ENCODE measurements at regions of chr3 and their contacts with region 1.

Region 1: DNA sequence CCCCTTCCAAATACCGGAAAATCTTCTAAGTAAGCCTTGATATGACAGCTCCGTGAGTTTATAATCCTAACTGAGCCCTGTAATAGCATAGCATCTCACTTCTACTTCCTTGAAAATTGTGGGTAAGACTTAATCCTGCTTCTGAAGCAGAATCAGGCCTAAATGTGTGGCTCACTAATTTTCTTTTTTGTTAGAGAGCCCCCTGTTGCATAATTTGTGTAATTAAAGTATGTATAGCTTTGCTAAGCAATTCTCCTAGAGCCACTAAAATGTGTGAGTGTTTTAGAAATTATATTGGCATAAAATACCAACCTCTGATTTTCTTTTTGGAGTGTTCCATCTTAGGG is 304.4 kb downstream of the FGF12 start:
- DNase-seq: no peak
- ATAC-seq: peak; percentile 46; the same call in 1 of the 2 replicates
- H3K4me3 ChIP-seq: no peak overlapping the region
- H3K27ac ChIP-seq: no peak overlapping the region
- H3K4me1 ChIP-seq: no peaks in the 10 kb centered on the region
- H3K27me3 ChIP-seq: peaks cover 15% of the 10 kb centered on the region; the same call in 1 of the 2 replicates
- CTCF ChIP-seq: peak; percentile 23 to 57 (median 25); a peak in 4 of 6 replicates
- POLR2A ChIP-seq: no peak
- RAD21 ChIP-seq: peak; percentile 54

Region 2: DNA sequence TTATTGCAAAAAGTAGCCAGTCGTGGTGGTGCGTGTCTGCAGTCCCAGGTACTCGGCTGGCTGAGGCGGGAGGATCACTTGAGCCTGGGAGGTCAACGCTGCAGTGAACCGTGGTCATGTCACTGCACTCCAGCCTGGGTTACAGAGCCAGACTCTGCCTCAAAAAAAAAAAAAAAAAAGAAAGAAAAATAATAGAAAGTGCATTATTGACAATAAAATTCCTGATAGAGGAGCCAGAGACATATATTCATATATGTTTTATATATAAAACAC is 1005.6 kb before region 1 on chr3:
- CTCF ChIA-PET with region 1: no interaction called
- POLR2A ChIA-PET with region 1: no interaction called
- RAD21 ChIA-PET with region 1: no interaction called
- intact Hi-C with region 1: loop called (anchors 2 kb)
- DNase-seq: no peak
- ATAC-seq: no peak
- H3K4me3 ChIP-seq: no peak overlapping the region
- H3K27ac ChIP-seq: no peak overlapping the region
- H3K4me1 ChIP-seq: no peaks in the 10 kb centered on the region; a peak in 1 of 4 replicates
- H3K27me3 ChIP-seq: no peaks in the 10 kb centered on the region
- CTCF ChIP-seq: no peak
- POLR2A ChIP-seq: no peak
- RAD21 ChIP-seq: no peak

Region 3: GRCh38 chr3:192130534-192131132 is 292.3 kb before region 1 on chr3:
- CTCF ChIA-PET with region 1: no interaction called
- POLR2A ChIA-PET with region 1: no interaction called
- RAD21 ChIA-PET with region 1: no interaction called
- intact Hi-C with region 1: loop called (anchors 2 kb)
- DNase-seq: peak; percentile 60
- ATAC-seq: peak; percentile 100
- H3K4me3 ChIP-seq: no peak overlapping the region
- H3K27ac ChIP-seq: no peak overlapping the region
- H3K4me1 ChIP-seq: no peaks in the 10 kb centered on the region
- H3K27me3 ChIP-seq: no peaks in the 10 kb centered on the region
- CTCF ChIP-seq: peak; percentile 42 to 85 (median 82); a peak in 5 of 6 replicates
- POLR2A ChIP-seq: no peak
- RAD21 ChIP-seq: peak; percentile 57

Region 4: GRCh38 chr3:192188218-192188835 is 234.6 kb before region 1 on chr3:
- CTCF ChIA-PET with region 1: interaction called, 5 read pairs
- POLR2A ChIA-PET with region 1: no interaction called
- RAD21 ChIA-PET with region 1: no interaction called
- intact Hi-C with region 1: loop called (anchors 1 kb)
- DNase-seq: peak; percentile 47
- ATAC-seq: peak; percentile 95
- H3K4me3 ChIP-seq: no peak overlapping the region
- H3K27ac ChIP-seq: no peak overlapping the region
- H3K4me1 ChIP-seq: no peaks in the 10 kb centered on the region
- H3K27me3 ChIP-seq: no peaks in the 10 kb centered on the region
- CTCF ChIP-seq: peak; percentile 56 to 84 (median 80)
- POLR2A ChIP-seq: no peak
- RAD21 ChIP-seq: peak; percentile 57

Measured in HCT116 (cell line).